CD4-positive, alpha-beta memory T cell (primary cell): ENCODE measurements at regions of chr10 and their contacts with region 1.

Region 1: DNA sequence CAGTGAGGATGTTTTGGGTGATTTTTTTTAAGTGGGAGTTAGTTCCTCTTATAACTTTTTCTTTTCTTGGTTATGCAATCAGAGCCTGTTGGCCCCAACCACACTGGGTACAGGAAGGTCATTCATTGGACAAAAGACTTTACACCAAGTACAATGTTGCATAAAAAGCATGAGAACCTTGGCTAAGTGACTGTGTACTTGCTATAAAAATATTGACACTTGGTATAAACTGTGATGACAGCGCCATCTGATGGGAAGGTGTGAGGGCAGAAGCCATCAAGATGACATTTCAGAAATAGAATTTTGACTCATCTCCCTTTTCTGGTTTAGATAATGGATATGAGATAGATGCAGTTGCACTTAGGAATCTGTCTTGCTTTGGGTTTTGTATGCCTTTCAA is 126.4 kb upstream of the CCDC6 start:
- DNase-seq: peak in 1 of 5 donors; percentile 12
- H3K4me3 ChIP-seq: no peak overlapping the region
- H3K4me3 Mint-ChIP-seq: no peak overlapping the region
- H3K27ac ChIP-seq: no peak overlapping the region
- H3K27ac Mint-ChIP-seq: peak overlapping the region in 1 of 7 donors; percentile 16
- H3K4me1 ChIP-seq: no peaks in the 10 kb centered on the region
- H3K4me1 Mint-ChIP-seq: peaks cover 0 to 3% (median 0%) of the 10 kb centered on the region in 4 donors
- H3K27me3 ChIP-seq: no peaks in the 10 kb centered on the region
- H3K27me3 Mint-ChIP-seq: no peaks in the 10 kb centered on the region

Region 2: GRCh38 chr10:59865101-59865500 is 167.6 kb before region 1 on chr10:
- CTCF ChIA-PET with region 1: interaction called, 7 read pairs
- POLR2A ChIA-PET with region 1: no interaction called
- intact Hi-C with region 1: loop called (anchors 5 kb)
- DNase-seq: peak in 1 of 5 donors; percentile 22
- H3K4me3 ChIP-seq: no peak overlapping the region
- H3K4me3 Mint-ChIP-seq: peak overlapping the region in 5 of 8 donors; percentile 1 to 47 (median 12)
- H3K27ac ChIP-seq: no peak overlapping the region
- H3K27ac Mint-ChIP-seq: peak overlapping the region in 5 of 7 donors; percentile 2 to 63 (median 9)
- H3K4me1 ChIP-seq: peaks cover 24% of the 10 kb centered on the region
- H3K4me1 Mint-ChIP-seq: peaks cover 46 to 78% (median 65%) of the 10 kb centered on the region in 4 donors
- H3K27me3 ChIP-seq: no peaks in the 10 kb centered on the region
- H3K27me3 Mint-ChIP-seq: no peaks in the 10 kb centered on the region

Region 3: DNA sequence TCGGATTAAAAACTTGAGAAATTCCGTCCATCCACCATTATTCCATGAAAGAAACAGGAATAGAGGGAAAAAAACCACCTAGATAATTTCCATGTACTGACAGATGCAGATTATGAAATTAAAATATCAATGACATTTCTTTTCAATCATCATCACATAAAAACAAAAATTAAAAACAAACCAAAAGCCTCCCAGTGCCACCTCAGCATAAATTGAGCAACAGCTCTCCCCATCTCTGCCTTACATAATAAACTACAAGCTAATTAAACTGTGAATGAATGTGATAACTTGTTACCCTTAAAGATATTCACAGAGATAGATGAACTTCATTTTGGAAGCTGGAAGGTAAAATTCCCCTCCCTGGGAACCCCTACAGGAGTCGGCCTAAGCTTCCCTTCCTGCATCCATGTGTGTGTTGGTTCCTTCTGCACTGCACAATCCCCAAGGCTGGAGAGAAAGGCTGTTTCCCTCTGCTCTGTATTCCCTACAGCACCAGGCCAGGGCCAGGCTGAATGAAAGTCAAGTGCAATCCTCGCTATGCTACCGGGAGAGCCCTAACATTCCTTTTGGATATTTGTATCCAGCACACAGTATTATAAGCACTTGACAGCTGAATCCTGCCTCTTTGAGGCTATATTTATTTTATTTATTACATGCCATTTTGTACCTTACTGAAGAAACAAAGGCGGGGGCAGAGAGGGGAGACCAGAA is 134.4 kb before region 1 on chr10:
- CTCF ChIA-PET with region 1: no interaction called
- POLR2A ChIA-PET with region 1: no interaction called
- intact Hi-C with region 1: no loop called
- DNase-seq: no peak
- H3K4me3 ChIP-seq: no peak overlapping the region
- H3K4me3 Mint-ChIP-seq: no peak overlapping the region
- H3K27ac ChIP-seq: no peak overlapping the region
- H3K27ac Mint-ChIP-seq: no peak overlapping the region
- H3K4me1 ChIP-seq: peaks cover 24% of the 10 kb centered on the region
- H3K4me1 Mint-ChIP-seq: peaks cover 55 to 83% (median 62%) of the 10 kb centered on the region in 4 donors
- H3K27me3 ChIP-seq: no peaks in the 10 kb centered on the region
- H3K27me3 Mint-ChIP-seq: no peaks in the 10 kb centered on the region